Activated CD8-positive, alpha-beta T cell treated with anti-CD3 and anti-CD28 coated beads for 36 hours (primary cell): ENCODE measurements at regions of chr6 and their contacts with region 1.

Region 1: GRCh38 chr6:132279592-132280139 is 121.6 kb downstream of the MOXD1 start:
- DNase-seq: peak; percentile 79
- ATAC-seq: peak; percentile 88
- H3K4me3 Mint-ChIP-seq: peak overlapping the region; percentile 64
- H3K27ac Mint-ChIP-seq: no peak overlapping the region
- H3K4me1 Mint-ChIP-seq: no peaks in the 10 kb centered on the region
- H3K27me3 Mint-ChIP-seq: peaks cover 23% of the 10 kb centered on the region
- CTCF ChIP-seq: peak; percentile 98

Region 2: DNA sequence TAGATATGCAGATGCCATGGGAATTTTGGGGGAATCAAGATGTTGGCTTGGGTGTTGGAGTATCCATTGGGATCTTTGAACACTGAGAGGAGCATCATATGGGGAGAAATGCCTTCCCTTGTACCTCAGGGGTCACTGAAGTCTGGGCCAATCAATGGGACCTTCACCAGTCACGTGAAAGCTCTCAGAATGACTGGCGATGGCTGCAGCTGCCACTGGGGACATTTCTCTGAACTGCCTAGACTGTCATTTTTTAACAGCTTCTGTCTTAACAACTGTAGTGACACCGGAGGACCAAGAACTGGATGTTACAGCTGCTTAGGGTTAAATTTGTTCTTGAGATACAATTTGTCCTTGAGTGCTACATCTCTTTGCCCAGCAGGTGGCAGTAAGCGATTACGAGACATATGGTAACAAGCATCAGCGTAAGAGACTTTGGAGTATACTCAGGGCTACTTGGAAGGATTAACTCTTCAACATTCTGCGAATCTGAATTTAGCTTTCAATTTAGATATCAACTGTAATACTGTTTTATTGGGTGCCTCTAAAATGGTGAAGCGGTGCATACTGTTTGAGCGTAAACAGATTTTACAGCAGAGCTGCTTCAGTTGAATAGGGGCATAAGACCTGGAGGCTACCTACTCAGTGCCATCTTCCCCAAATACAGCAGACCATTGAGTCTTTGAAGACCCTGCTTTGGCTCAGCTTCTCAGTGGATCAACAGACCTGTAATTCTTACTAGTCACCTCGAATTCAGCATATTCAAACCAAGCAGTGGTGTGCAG is 364.5 kb before region 1 on chr6:
- CTCF ChIA-PET with region 1: interaction called, 13 read pairs
- POLR2A ChIA-PET with region 1: no interaction called
- intact Hi-C with region 1: no loop called
- DNase-seq: peak; percentile 79
- ATAC-seq: peak; percentile 73
- H3K4me3 Mint-ChIP-seq: no peak overlapping the region
- H3K27ac Mint-ChIP-seq: no peak overlapping the region
- H3K4me1 Mint-ChIP-seq: peaks cover 16% of the 10 kb centered on the region
- H3K27me3 Mint-ChIP-seq: peaks cover 52% of the 10 kb centered on the region
- CTCF ChIP-seq: peak; percentile 73

Region 3: DNA sequence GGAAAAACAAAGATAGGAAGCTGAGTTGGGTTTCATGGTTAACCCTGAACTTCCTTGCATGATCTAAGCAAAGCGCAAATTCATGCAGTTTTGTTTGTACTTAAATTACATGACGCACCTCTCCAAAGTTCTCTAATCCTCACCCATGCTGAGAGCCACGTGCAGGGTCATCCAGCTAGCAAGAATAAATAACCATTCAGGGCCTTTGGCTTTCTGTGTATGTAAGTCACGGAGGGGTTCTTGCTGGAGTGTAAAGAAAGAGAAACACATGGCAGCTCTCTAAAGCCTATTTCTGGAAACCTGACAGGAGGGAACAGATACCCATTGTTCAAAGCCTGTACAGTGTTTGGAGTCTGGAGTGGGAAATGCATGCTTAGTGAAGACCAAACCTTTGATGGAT is 156.8 kb before region 1 on chr6:
- CTCF ChIA-PET with region 1: no interaction called
- POLR2A ChIA-PET with region 1: no interaction called
- intact Hi-C with region 1: no loop called
- DNase-seq: no peak
- ATAC-seq: no peak
- H3K4me3 Mint-ChIP-seq: no peak overlapping the region
- H3K27ac Mint-ChIP-seq: no peak overlapping the region
- H3K4me1 Mint-ChIP-seq: no peaks in the 10 kb centered on the region
- H3K27me3 Mint-ChIP-seq: no peaks in the 10 kb centered on the region
- CTCF ChIP-seq: no peak

Region 4: DNA sequence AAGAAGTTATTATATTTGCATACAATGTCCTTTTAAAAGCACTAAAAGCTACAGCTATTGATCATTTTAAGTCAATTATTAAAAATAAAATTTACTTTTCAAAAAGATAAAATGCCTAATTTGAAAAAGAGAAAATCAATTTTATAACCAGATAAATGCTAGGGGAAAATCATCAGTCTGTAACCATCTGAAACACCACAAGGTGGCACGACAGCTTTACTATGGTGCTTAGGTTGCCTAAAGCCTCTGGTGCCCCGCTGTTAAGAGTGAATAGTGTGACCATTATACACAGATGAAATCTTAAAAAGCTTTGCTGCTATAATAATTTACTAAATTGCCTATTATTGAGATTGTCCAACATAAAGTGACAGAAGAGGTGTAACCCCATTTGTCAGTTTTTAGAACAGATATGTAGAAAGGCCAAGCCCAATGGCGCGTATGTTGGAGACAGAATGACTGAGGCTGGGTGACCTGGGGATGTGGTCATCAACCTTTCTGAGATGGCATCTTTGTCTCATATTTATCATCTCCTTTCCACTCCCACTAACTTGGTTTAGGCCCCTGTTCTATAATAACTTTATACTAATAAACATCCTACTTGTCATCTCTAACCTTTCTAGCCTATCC is 20.8 kb after region 1 on chr6:
- CTCF ChIA-PET with region 1: interaction called, 65 read pairs
- POLR2A ChIA-PET with region 1: interaction called, 3 read pairs
- intact Hi-C with region 1: no loop called
- DNase-seq: peak; percentile 59
- ATAC-seq: peak; percentile 67
- H3K4me3 Mint-ChIP-seq: no peak overlapping the region
- H3K27ac Mint-ChIP-seq: no peak overlapping the region
- H3K4me1 Mint-ChIP-seq: no peaks in the 10 kb centered on the region
- H3K27me3 Mint-ChIP-seq: peaks cover 8% of the 10 kb centered on the region
- CTCF ChIP-seq: peak; percentile 61

Region 5: GRCh38 chr6:132391391-132392271 is 112.0 kb after region 1 on chr6:
- CTCF ChIA-PET with region 1: interaction called, 28 read pairs
- POLR2A ChIA-PET with region 1: no interaction called
- intact Hi-C with region 1: no loop called
- DNase-seq: no peak
- ATAC-seq: no peak
- H3K4me3 Mint-ChIP-seq: no peak overlapping the region
- H3K27ac Mint-ChIP-seq: no peak overlapping the region
- H3K4me1 Mint-ChIP-seq: no peaks in the 10 kb centered on the region
- H3K27me3 Mint-ChIP-seq: peaks cover 14% of the 10 kb centered on the region
- CTCF ChIP-seq: no peak

Region 6: GRCh38 chr6:132465530-132466485 is 186.1 kb after region 1 on chr6:
- CTCF ChIA-PET with region 1: interaction called, 41 read pairs
- POLR2A ChIA-PET with region 1: no interaction called
- intact Hi-C with region 1: no loop called
- DNase-seq: no peak
- ATAC-seq: peak; percentile 58
- H3K4me3 Mint-ChIP-seq: no peak overlapping the region
- H3K27ac Mint-ChIP-seq: no peak overlapping the region
- H3K4me1 Mint-ChIP-seq: no peaks in the 10 kb centered on the region
- H3K27me3 Mint-ChIP-seq: no peaks in the 10 kb centered on the region
- CTCF ChIP-seq: no peak

Region 7: GRCh38 chr6:132491303-132491702 is 211.6 kb after region 1 on chr6:
- CTCF ChIA-PET with region 1: interaction called, 276 read pairs
- POLR2A ChIA-PET with region 1: no interaction called
- intact Hi-C with region 1: no loop called
- DNase-seq: peak; percentile 25
- ATAC-seq: peak; percentile 64
- H3K4me3 Mint-ChIP-seq: no peak overlapping the region
- H3K27ac Mint-ChIP-seq: no peak overlapping the region
- H3K4me1 Mint-ChIP-seq: peaks cover 25% of the 10 kb centered on the region
- H3K27me3 Mint-ChIP-seq: no peaks in the 10 kb centered on the region
- CTCF ChIP-seq: no peak